T-cell (primary cell): ENCODE measurements at regions of chr7 and their contacts with region 1.

Region 1: DNA sequence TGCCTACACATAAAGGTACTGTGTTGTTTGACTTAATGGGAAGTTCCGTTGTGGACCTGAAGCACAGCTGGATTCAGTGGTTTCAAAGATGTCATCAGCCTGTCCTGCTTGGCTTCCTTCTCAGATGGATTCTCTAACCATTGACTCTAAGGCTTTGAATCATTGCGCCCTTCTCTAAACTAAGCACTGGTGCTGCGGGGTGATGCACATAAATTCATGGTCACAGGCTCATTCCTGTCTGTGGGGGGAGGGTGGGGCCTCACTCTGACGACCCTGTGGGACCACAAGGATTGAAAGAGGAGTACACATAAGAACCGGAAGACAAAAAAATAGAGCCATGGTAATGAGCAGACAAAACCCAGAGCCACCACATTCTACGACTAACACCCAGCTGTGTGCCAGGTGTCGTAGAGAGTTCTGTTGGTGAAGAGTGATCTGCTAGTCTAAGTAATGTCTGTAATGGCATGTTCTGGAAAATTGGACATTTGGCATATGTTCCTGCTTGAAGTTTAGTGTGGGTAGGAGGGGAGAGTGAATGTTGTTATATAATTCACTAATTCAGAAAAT is 97.3 kb upstream of the YAE1 start:
- DNase-seq: no peak
- ATAC-seq: no peak
- H3K4me3 ChIP-seq: no peak overlapping the region
- H3K4me3 Mint-ChIP-seq: no peak overlapping the region
- H3K27ac ChIP-seq: no peak overlapping the region
- H3K27ac Mint-ChIP-seq: no peak overlapping the region
- H3K4me1 ChIP-seq: peaks cover 0 to 4% of the 10 kb centered on the region in 2 experiments
- H3K4me1 Mint-ChIP-seq: peaks cover 6 to 13% (median 7%) of the 10 kb centered on the region in 3 donors
- H3K27me3 ChIP-seq: peaks cover 0 to 6% of the 10 kb centered on the region in 2 experiments
- H3K27me3 Mint-ChIP-seq: peaks cover 18 to 20% of the 10 kb centered on the region in 2 donors

Region 2: GRCh38 chr7:39488467-39489393 is 19.8 kb after region 1 on chr7:
- CTCF ChIA-PET with region 1: no interaction called
- POLR2A ChIA-PET with region 1: interaction called in 1 of 2 experiments, 14 read pairs
- DNase-seq: no peak
- ATAC-seq: no peak
- H3K4me3 ChIP-seq: no peak overlapping the region
- H3K4me3 Mint-ChIP-seq: no peak overlapping the region
- H3K27ac ChIP-seq: no peak overlapping the region
- H3K27ac Mint-ChIP-seq: no peak overlapping the region
- H3K4me1 ChIP-seq: no peaks in the 10 kb centered on the region
- H3K4me1 Mint-ChIP-seq: no peaks in the 10 kb centered on the region
- H3K27me3 ChIP-seq: peaks cover 0 to 10% of the 10 kb centered on the region in 2 experiments
- H3K27me3 Mint-ChIP-seq: peaks cover 21 to 28% of the 10 kb centered on the region in 2 donors